Activated naive CD8-positive, alpha-beta T cell treated with anti-CD3 and anti-CD28 coated beads, Interleukin-2, amount 10 ng/mL, durations not matched to agents 7 days and 5 days (primary cell): ENCODE measurements at regions of chr17 and their contacts with region 1.

Region 1: DNA sequence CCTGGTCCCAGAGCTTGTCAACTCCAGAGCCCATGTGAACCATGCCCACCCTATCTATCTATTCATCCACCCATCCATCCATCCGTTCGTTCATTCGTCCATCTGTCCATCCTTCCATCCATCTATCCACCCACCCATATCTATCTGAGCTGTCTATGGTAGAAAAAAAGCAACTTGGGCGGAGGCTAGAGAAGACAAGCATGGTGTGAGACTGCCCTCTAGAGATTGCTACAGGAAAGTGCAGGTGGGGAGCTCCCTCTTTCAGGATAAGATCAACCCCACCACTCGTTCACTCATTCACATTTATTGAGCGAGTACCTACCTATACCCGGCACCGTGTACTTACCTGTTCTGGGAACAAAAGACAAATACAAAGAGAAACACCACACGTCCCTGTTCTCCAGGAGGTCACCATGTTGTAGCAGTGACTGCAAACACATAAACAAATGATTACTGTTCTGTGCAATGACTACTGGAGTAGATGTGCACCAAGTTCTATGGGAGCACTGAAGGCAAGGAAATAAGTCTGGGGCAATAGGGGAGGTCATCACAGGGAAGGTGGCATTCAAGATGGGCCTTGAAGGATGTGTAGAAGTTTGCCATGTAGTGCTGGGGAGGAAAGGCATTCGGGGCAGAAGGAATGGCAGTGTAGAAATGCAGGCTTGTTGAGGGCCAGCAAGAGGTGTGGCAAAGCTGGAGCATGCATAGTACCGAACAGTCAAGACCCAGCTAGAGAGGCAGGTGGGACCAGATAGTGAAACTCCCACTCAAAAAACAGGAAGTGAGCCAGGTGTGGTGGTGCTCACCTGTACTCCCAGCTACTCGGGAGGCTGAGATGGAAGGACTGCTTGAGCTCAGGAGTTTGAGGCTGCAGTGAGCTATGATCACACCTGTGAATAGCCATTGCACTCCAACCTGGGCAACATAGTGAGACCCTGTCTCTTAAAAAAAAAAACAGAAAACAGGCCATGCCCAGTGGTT is 13.4 kb upstream of the ATP5MC1 start:
- DNase-seq: no peak
- ATAC-seq: peak; percentile 75
- H3K4me3 Mint-ChIP-seq: no peak overlapping the region
- H3K27ac Mint-ChIP-seq: no peak overlapping the region
- H3K4me1 Mint-ChIP-seq: peaks cover 13% of the 10 kb centered on the region
- H3K27me3 Mint-ChIP-seq: peaks cover 2% of the 10 kb centered on the region

Region 2: DNA sequence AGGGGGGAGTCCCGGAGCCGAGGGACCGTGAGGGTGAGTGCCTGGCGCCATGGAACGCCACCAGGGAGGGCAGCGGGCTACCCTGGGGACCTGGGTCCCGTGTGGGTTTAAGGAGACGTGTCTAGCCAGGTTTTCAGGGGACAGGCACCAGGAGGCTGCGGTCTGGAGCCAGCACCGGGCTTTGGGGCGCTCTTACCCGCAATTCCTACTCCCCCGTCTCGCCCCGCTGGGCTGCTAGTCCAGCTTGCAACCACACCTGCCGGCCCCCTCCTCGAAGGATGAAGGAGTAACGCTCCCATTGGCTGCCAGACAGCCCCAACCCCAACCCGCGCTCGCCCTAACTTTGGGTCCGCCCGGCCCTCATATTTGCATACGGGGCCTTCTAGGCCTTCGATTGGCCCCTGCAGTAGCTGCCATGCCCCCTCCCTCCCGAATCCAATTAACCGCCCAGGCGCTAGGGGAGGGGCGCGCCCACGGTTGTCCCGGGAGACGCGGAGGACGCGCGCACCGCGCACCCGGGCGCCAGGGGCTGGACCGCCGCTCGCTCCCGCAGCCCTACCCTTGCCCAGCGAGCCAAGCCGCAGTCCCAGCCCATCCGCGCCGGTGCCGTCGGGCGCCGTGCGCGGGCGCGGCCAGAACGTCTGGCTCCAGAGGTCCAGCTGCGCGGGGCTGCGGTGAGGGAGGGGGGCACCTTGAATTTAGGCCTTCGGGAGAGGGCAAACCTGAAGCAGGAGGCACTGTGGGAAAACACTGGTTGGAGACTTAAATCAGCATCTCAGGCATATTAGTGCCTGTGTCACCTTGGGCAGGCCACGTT is 62.2 kb before region 1 on chr17 and contains the start of gene TTLL6:
- POLR2A ChIA-PET with region 1: interaction called, 13 read pairs
- DNase-seq: peak; percentile 80
- ATAC-seq: peak; percentile 99
- H3K4me3 Mint-ChIP-seq: peak within 1 kb of the TSS; percentile 85
- H3K27ac Mint-ChIP-seq: peak within 1 kb of the TSS; percentile 14
- H3K4me1 Mint-ChIP-seq: peaks cover 16% of the 10 kb centered on the region
- H3K27me3 Mint-ChIP-seq: peaks cover 79% of the 10 kb centered on the region
- total RNA-seq, gene TTLL6: not detected

Region 3: GRCh38 chr17:48868916-48869494 is 10.2 kb before region 1 on chr17:
- POLR2A ChIA-PET with region 1: no interaction called
- DNase-seq: no peak
- ATAC-seq: no peak
- H3K4me3 Mint-ChIP-seq: no peak overlapping the region
- H3K27ac Mint-ChIP-seq: no peak overlapping the region
- H3K4me1 Mint-ChIP-seq: peaks cover 1% of the 10 kb centered on the region
- H3K27me3 Mint-ChIP-seq: no peaks in the 10 kb centered on the region